ENCODE measurements at regions of chr16 and their contacts with region 1.

Region 1: GRCh38 chr16:50354629-50355456 is 13.9 kb downstream of the BRD7 start:
- DNase-seq: no peak
- ATAC-seq: no peak
- H3K4me3 Mint-ChIP-seq: no peak overlapping the region
- H3K27ac Mint-ChIP-seq: peak overlapping the region; percentile 25; the same call in 1 of the 2 replicates
- H3K4me1 Mint-ChIP-seq: peaks cover 3% of the 10 kb centered on the region; the same call in 1 of the 2 replicates
- H3K27me3 Mint-ChIP-seq: no peaks in the 10 kb centered on the region
- CTCF ChIP-seq: no peak

Region 2: DNA sequence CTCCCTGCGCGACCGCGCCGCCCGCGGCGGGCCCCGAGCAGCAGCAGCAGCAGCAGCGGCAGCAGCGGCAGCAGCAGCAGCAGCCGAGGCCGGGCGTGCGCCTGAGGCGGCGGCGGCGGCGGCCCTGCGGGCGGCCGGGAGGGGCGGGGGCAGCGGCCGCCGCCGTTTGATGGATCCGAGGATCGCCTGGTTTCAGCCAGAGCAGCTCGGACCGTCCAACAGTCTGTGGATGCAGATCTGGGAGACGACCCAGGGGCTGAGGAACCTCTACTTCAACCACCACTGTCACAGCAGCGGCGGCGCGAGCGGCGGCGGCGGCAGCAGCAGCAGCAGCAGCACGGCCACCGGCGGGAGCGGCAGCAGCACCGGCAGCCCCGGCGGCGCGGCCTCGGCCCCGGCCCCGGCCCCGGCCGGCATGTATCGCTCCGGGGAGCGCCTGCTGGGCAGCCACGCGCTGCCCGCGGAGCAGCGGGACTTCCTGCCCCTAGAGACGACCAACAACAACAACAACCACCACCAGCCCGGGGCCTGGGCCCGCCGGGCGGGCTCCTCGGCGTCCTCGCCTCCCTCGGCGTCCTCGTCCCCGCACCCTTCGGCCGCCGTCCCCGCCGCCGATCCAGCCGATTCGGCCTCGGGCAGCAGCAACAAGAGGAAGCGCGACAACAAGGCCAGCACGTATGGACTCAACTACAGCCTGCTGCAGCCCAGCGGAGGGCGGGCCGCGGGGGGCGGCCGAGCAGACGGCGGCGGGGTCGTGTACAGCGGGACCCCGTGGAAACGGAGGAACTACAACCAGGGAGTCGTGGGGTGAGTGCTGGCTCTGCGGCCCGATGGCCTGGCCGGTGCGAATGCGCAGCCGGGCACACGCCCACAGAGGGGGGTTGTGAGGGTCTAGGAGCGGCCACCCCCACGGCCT is 201.1 kb before region 1 on chr16:
- CTCF ChIA-PET with region 1: no interaction called
- POLR2A ChIA-PET with region 1: no interaction called
- DNase-seq: peak; percentile 32
- ATAC-seq: peak; percentile 3; the same call in 1 of the 2 replicates
- H3K4me3 Mint-ChIP-seq: peak overlapping the region; percentile 81
- H3K27ac Mint-ChIP-seq: no peak overlapping the region
- H3K4me1 Mint-ChIP-seq: peaks cover 21% of the 10 kb centered on the region
- H3K27me3 Mint-ChIP-seq: peaks cover 3% of the 10 kb centered on the region; the same call in 1 of the 2 replicates
- CTCF ChIP-seq: no peak

Region 3: GRCh38 chr16:50303657-50304466 is 51.0 kb before region 1 on chr16:
- CTCF ChIA-PET with region 1: no interaction called
- POLR2A ChIA-PET with region 1: no interaction called
- DNase-seq: no peak
- ATAC-seq: no peak
- H3K4me3 Mint-ChIP-seq: no peak overlapping the region
- H3K27ac Mint-ChIP-seq: no peak overlapping the region
- H3K4me1 Mint-ChIP-seq: no peaks in the 10 kb centered on the region
- H3K27me3 Mint-ChIP-seq: no peaks in the 10 kb centered on the region
- CTCF ChIP-seq: no peak

Region 4: GRCh38 chr16:50326949-50327402 is 27.9 kb before region 1 on chr16:
- CTCF ChIA-PET with region 1: interaction called, 26 read pairs
- POLR2A ChIA-PET with region 1: no interaction called
- DNase-seq: no peak
- ATAC-seq: peak; percentile 68
- H3K4me3 Mint-ChIP-seq: no peak overlapping the region
- H3K27ac Mint-ChIP-seq: no peak overlapping the region
- H3K4me1 Mint-ChIP-seq: no peaks in the 10 kb centered on the region
- H3K27me3 Mint-ChIP-seq: no peaks in the 10 kb centered on the region
- CTCF ChIP-seq: no peak

Region 5: DNA sequence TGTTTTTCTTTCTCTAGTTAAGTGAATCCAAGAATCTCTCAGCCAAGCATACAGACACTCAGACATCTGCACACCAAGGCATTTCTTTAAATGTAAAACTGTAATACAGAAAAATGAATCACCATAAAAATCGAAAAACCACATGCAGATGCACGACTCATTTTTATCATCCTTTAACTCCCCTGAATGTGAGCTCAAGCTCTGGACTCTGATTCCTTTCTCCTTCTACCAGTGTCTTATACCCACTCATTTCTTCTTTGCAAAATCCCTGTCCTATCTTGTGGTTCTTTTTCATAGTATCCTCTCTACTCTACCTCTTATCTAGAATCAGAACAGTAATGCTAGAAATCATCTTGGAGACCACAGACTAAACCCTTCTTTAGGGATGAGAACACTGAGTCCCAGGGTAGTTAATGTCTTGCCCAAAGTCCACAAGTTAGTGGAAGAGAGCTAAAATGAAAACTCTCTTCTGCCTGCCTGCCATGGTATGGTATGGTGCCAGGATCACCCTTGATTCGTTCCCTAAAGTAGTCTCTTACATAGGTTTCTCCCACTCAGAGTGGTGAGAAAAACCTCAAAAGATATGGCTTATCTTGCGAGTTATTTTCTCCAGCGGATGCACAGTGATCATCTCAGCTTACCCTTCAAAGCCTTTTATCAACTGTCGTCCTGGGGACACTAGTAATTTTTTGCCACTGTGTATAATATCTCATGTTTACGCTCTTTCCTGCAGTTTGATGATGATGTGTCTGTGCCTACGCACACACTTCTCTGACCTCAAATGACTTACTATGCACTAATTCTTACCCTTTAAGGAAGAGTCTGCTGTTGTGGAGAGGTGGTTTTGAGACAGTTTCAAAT is 16.2 kb before region 1 on chr16:
- CTCF ChIA-PET with region 1: interaction called, 10 read pairs
- POLR2A ChIA-PET with region 1: no interaction called
- DNase-seq: no peak
- ATAC-seq: no peak
- H3K4me3 Mint-ChIP-seq: no peak overlapping the region
- H3K27ac Mint-ChIP-seq: peak overlapping the region; percentile 60; the same call in 1 of the 2 replicates
- H3K4me1 Mint-ChIP-seq: peaks cover 6% of the 10 kb centered on the region
- H3K27me3 Mint-ChIP-seq: no peaks in the 10 kb centered on the region
- CTCF ChIP-seq: no peak

Measured in WTC11 (cell line).